PC-3 (cell line): ENCODE measurements at regions of chr13 and their contacts with region 1.

Region 1: DNA sequence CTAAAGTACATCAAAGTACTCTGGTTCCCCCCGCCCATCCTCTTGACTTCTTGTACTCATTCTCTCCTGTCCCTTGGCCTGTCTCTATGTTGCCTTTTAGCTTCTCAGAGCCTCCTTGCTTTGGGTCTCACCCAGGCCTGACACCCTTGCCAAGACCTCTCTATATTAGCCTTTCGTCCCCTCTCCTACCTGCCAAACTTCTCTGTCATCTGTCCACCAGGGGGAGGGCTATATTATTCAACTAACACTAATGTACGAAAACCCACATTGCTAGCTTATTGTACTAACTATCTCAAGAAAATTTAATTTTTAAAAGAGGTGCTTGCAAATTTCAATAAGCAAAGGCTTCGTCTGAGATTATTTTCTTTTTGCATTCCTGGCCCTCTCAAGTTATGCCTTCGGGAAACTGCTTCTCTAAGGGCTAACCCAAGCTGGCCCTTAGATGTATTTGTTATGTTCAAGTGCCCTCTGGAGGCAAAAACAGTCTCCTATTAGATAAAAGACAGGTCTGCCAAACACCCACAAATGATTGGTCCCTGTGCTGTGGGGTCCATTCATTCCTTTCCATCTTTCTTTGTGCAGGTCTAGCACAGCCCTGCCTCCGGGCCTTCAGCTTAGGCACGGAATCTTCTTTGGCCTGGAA is 6.3 kb upstream of the MRPS31 start:
- DNase-seq: peak; percentile 55
- ATAC-seq: peak; percentile 88
- H3K4me3 ChIP-seq: peak overlapping the region; percentile 55
- H3K27ac ChIP-seq: peak overlapping the region; percentile 25; the same call in 1 of the 2 replicates
- H3K4me1 ChIP-seq: peaks cover 7% of the 10 kb centered on the region
- H3K27me3 ChIP-seq: no peaks in the 10 kb centered on the region
- CTCF ChIP-seq: peak; percentile 77

Region 2: DNA sequence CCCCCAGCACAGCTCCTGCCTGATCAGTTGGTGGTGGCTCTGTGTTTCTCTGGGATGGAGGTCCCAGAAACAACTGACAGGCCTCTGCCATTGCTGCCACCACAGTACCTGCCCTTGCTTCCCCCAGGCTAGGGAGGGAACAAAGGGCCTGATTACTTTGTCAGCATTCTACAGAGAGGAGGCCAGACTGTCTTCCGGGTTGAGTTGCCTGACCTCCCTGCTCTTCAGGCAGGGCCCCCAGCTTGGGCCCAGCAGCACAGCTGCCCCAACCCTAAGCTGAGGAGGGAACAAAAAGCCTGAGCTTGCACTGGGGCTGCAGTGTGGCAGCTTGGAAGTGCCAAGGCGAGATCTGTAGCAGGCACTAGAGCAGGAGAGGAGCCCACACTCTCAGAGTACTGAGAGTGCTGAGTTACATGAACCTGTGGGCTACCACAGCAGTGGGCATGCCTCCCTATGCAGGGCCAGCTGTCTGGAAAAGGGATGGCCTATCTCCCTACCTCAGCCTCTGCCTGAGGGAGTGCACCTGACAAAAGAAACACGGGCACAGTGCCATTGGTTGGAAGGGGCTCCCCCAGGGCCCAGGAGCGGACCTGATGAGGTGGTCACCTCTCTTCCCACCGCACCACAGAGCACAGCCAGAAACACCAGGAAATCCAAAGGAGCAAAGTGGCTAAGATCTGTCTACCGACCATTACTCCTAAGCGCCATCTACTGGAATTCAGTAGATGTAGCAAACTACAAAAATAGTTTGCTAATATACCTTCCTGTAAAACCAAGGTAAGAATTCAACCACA is 36.6 kb after region 1 on chr13:
- CTCF ChIA-PET with region 1: interaction called, 4 read pairs
- POLR2A ChIA-PET with region 1: no interaction called
- intact Hi-C with region 1: loop called (anchors 1 kb)
- DNase-seq: peak; percentile 53
- ATAC-seq: peak; percentile 79
- H3K4me3 ChIP-seq: no peak overlapping the region
- H3K27ac ChIP-seq: no peak overlapping the region
- H3K4me1 ChIP-seq: peaks cover 3% of the 10 kb centered on the region; the same call in 1 of the 2 replicates
- H3K27me3 ChIP-seq: no peaks in the 10 kb centered on the region
- CTCF ChIP-seq: peak; percentile 71

Region 3: DNA sequence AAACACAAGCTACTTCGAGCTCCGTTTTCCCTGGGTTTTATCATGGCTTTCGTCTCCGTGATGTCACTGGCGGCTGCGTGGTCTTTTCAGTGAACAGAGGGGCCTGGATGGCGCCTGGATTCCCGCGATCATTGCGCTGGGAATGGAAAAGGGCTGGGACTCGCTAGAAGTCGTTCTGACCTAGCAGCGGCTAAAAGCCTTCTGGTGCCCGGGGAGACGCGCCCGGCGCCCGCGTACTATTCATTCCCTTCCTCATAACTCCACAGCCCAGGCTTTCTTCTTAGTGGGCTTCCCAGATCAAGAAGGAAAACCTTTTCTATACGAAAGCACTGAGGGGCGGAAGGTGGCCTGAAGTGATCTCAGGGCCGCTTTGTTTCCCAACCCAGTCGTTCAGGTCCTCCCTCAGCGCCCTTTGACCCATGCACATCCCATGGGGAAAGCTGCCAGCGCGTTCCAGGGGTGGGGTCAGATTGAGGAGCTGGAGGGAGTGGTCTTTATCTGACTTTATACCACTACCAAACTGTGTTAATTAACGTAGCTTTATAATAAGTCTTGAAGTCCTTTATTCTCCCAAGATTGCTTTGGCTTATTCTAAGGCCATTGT is 145.3 kb after region 1 on chr13:
- CTCF ChIA-PET with region 1: no interaction called
- POLR2A ChIA-PET with region 1: no interaction called
- intact Hi-C with region 1: loop called (anchors 5 kb)
- DNase-seq: no peak
- ATAC-seq: no peak
- H3K4me3 ChIP-seq: no peak overlapping the region
- H3K27ac ChIP-seq: no peak overlapping the region
- H3K4me1 ChIP-seq: peaks cover 7% of the 10 kb centered on the region
- H3K27me3 ChIP-seq: no peaks in the 10 kb centered on the region
- CTCF ChIP-seq: no peak

Region 4: GRCh38 chr13:41345914-41346589 is 568.8 kb after region 1 on chr13:
- CTCF ChIA-PET with region 1: no interaction called
- POLR2A ChIA-PET with region 1: no interaction called
- intact Hi-C with region 1: no loop called
- DNase-seq: no peak
- ATAC-seq: no peak
- H3K4me3 ChIP-seq: no peak overlapping the region
- H3K27ac ChIP-seq: no peak overlapping the region
- H3K4me1 ChIP-seq: no peaks in the 10 kb centered on the region
- H3K27me3 ChIP-seq: no peaks in the 10 kb centered on the region
- CTCF ChIP-seq: no peak